Heart right ventricle (tissue), 16 donors: ENCODE measurements at regions of chr4 and their contacts with region 1.

Region 1: GRCh38 chr4:184007891-184008290 is 102.8 kb downstream of the STOX2 start:
- DNase-seq: no peak
- ATAC-seq: no peak
- H3K4me3 ChIP-seq: no peak overlapping the region
- H3K27ac ChIP-seq: no peak overlapping the region
- H3K4me1 ChIP-seq: peaks cover 0 to 15% (median 13%) of the 10 kb centered on the region in 9 donors
- H3K27me3 ChIP-seq: no peaks in the 10 kb centered on the region
- CTCF ChIP-seq: no peak

Region 2: GRCh38 chr4:183971929-183972490 is 35.9 kb before region 1 on chr4:
- intact Hi-C with region 1: loop called in 1 of 10 experiments (anchors 2 kb)
- DNase-seq: peak; percentile 60 to 62
- ATAC-seq: peak; percentile 72 to 95 (median 82)
- H3K4me3 ChIP-seq: peak overlapping the region in 2 of 10 donors; percentile 8
- H3K27ac ChIP-seq: no peak overlapping the region
- H3K4me1 ChIP-seq: peaks cover 0 to 18% (median 12%) of the 10 kb centered on the region in 9 donors
- H3K27me3 ChIP-seq: no peaks in the 10 kb centered on the region
- CTCF ChIP-seq: no peak

Region 3: DNA sequence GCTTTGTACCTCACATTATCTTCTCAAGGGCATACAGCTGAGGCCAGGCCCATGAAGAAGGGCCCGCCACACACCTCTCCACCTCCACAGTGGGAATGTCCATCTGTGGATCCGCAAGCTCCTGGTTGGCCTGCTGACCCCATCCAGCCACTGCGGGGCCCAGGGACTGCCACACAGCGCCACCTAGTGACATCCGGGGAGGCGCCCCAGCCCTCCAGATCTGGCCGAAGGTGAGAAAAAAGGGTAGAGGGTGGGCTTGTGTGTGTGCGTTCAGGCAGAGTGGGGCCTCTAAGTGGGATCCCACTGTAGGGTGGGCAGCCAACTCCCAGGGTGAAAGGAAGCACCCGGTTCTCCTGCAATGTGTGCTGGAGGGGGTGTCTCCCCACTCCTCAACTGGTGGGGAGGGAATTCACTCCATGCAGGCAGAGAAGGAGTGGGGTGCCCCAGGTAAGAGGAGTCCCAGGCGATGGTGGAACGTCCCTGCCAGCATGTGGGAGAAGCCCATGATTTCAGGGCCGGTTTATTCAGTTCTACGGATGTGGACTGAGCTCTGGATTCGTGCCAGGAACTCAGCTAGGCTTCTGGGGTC is 92.5 kb after region 1 on chr4:
- intact Hi-C with region 1: loop called in 1 of 10 experiments (anchors 10 kb)
- DNase-seq: peak; percentile 11 to 73
- ATAC-seq: peak; percentile 40 to 82 (median 67)
- H3K4me3 ChIP-seq: no peak overlapping the region
- H3K27ac ChIP-seq: no peak overlapping the region
- H3K4me1 ChIP-seq: peaks cover 0 to 44% (median 20%) of the 10 kb centered on the region in 9 donors
- H3K27me3 ChIP-seq: no peaks in the 10 kb centered on the region
- CTCF ChIP-seq: peak; percentile 62 to 78 (median 72)